ENCODE measurements at regions of chrX and their contacts with region 1.

Region 1: GRCh38 chrX:40108959-40109287 is 11.2 kb upstream of the BCOR start:
- DNase-seq: peak; percentile 64 to 82 (median 80)
- H3K4me3 ChIP-seq: peak overlapping the region; percentile 46 to 72 (median 61)
- H3K27ac ChIP-seq: peak overlapping the region in 1 of 2 experiments; percentile 49
- H3K4me1 ChIP-seq: peaks cover 6 to 43% (median 37%) of the 10 kb centered on the region in 4 experiments
- H3K27me3 ChIP-seq: peaks cover 0 to 75% (median 0%) of the 10 kb centered on the region in 5 experiments

Region 2: GRCh38 chrX:39936886-39937770 is 171.8 kb before region 1 on chrX:
- CTCF ChIA-PET with region 1: no interaction called
- POLR2A ChIA-PET with region 1: no interaction called
- DNase-seq: peak; percentile 19 to 81 (median 72)
- H3K4me3 ChIP-seq: peak overlapping the region in 1 of 7 experiments; percentile 45
- H3K27ac ChIP-seq: no peak overlapping the region
- H3K4me1 ChIP-seq: peaks cover 4 to 24% (median 13%) of the 10 kb centered on the region in 4 experiments
- H3K27me3 ChIP-seq: no peaks in the 10 kb centered on the region

Region 3: GRCh38 chrX:40153335-40154249 is 44.7 kb after region 1 on chrX:
- CTCF ChIA-PET with region 1: interaction called, 4 read pairs
- POLR2A ChIA-PET with region 1: interaction called, 17 read pairs
- DNase-seq: peak; percentile 55 to 86 (median 86)
- H3K4me3 ChIP-seq: peak overlapping the region; percentile 26 to 75 (median 59)
- H3K27ac ChIP-seq: peak overlapping the region in 1 of 2 experiments; percentile 64
- H3K4me1 ChIP-seq: peaks cover 11 to 81% (median 66%) of the 10 kb centered on the region in 4 experiments
- H3K27me3 ChIP-seq: peaks cover 0 to 97% (median 0%) of the 10 kb centered on the region in 5 experiments

Measured in common myeloid progenitor, CD34-positive (primary cell).